Dendritic cell treated with granulocyte-macrophage colony-stimulating factor and Interleukin-4, amounts not matched to agents 40 ng/mL and 50 ng/mL, for 4 days (primary cell): ENCODE measurements at regions of chr9 and their contacts with region 1.

Region 1: DNA sequence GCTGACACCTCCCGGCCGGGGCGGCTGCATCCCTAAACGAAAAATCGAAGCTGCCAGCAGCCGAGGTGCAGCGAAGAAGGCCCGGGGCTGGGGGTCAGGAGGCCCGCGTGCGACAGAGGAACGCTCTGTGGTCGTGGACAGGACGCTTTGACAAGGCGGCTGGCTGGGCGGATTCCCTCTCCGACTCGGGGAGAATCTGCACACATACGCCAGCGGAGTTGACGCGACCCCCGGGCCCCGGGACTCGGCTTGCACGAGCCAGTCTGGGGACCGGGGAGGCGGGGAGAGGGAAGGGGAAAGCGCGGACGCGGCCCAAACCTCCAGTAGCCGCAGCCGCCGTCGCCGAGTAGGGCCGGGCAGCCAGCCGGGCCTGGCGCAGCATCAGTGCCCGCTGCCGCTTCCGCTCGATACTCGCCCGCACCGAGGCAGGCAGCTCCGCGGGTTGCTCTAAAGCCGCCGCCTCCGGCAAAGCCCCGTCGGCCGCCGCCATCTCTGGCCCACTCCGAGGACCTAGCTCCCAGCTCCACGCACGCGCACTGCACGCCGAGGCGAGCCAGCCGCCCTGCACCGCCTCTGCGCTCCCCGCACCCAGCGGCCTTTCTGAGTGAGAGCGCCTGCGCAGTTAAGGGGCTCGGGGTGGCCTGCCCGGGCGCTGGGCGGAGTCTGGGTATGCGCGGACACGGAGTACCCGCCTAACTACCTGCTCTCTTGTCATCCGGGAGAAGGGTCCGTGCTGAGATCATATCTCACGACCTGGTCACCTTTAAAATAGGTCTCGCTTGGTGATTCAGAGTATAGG is at the start of gene XPA:
- H3K4me3 Mint-ChIP-seq: peak within 1 kb of the TSS; percentile 91
- H3K27ac Mint-ChIP-seq: peak within 1 kb of the TSS; percentile 95
- H3K4me1 Mint-ChIP-seq: peaks cover 48% of the 10 kb centered on the region
- H3K27me3 Mint-ChIP-seq: peaks cover 23% of the 10 kb centered on the region

Region 2: GRCh38 chr9:97651646-97652045 is 45.4 kb before region 1 on chr9:
- intact Hi-C with region 1: loop called (anchors 5 kb)
- H3K4me3 Mint-ChIP-seq: no peak overlapping the region
- H3K27ac Mint-ChIP-seq: no peak overlapping the region
- H3K4me1 Mint-ChIP-seq: no peaks in the 10 kb centered on the region
- H3K27me3 Mint-ChIP-seq: no peaks in the 10 kb centered on the region

Region 3: GRCh38 chr9:97759581-97760288 is 62.7 kb after region 1 on chr9:
- intact Hi-C with region 1: no loop called
- H3K4me3 Mint-ChIP-seq: no peak overlapping the region
- H3K27ac Mint-ChIP-seq: no peak overlapping the region
- H3K4me1 Mint-ChIP-seq: no peaks in the 10 kb centered on the region
- H3K27me3 Mint-ChIP-seq: peaks cover 33% of the 10 kb centered on the region

Region 4: DNA sequence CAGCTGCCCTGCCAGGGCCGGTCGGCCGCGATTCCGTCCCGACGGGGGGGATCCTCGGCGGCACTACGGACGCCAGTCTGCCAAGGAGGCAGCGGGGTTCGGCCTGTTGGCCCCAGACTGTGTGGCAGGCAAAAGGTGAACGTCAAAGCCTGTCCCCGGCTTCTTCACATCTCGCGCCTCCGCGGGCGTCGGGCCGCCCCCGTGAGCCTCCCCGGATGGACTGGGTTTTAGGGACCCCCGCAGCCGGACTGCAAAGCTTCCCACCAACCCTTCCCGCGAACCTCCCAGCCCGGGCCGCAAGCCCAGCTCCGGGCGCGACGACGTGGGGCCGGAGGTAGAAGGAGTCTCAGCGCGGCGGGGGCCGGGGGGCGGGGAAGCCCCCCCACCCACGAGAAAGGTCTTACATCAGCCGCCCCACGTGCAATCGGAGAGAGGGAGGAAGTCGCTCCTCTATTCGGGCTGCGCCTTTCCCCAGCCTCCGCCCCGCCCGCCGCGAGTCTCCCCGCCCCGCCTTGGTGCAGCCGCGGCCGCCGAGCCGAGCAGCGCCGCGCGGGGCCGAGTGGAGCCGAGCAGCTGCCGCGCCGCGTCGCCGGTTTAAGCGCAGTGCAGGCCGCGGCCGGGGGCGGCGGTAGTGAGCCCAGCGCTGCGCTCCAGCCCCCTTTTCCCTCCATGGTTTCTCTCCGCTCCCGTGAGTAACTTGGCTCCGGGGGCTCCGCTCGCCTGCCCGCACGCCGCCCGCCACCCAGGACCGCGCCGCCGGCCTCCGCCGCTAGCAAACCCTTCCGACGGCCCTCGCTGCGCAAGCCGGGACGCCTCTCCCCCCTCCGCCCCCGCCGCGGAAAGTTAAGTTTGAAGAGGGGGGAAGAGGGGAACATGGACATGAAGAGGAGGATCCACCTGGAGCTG is 285.9 kb after region 1 on chr9 and contains the start of gene ANP32B:
- intact Hi-C with region 1: loop called (anchors 5 kb)
- H3K4me3 Mint-ChIP-seq: peak within 1 kb of the TSS; percentile 91
- H3K27ac Mint-ChIP-seq: peak within 1 kb of the TSS; percentile 96
- H3K4me1 Mint-ChIP-seq: peaks cover 29% of the 10 kb centered on the region
- H3K27me3 Mint-ChIP-seq: peaks cover 14% of the 10 kb centered on the region

Region 5: GRCh38 chr9:98045234-98046179 is 348.5 kb after region 1 on chr9:
- intact Hi-C with region 1: no loop called
- H3K4me3 Mint-ChIP-seq: peak overlapping the region; percentile 67
- H3K27ac Mint-ChIP-seq: peak overlapping the region; percentile 92
- H3K4me1 Mint-ChIP-seq: peaks cover 47% of the 10 kb centered on the region
- H3K27me3 Mint-ChIP-seq: no peaks in the 10 kb centered on the region

Region 6: DNA sequence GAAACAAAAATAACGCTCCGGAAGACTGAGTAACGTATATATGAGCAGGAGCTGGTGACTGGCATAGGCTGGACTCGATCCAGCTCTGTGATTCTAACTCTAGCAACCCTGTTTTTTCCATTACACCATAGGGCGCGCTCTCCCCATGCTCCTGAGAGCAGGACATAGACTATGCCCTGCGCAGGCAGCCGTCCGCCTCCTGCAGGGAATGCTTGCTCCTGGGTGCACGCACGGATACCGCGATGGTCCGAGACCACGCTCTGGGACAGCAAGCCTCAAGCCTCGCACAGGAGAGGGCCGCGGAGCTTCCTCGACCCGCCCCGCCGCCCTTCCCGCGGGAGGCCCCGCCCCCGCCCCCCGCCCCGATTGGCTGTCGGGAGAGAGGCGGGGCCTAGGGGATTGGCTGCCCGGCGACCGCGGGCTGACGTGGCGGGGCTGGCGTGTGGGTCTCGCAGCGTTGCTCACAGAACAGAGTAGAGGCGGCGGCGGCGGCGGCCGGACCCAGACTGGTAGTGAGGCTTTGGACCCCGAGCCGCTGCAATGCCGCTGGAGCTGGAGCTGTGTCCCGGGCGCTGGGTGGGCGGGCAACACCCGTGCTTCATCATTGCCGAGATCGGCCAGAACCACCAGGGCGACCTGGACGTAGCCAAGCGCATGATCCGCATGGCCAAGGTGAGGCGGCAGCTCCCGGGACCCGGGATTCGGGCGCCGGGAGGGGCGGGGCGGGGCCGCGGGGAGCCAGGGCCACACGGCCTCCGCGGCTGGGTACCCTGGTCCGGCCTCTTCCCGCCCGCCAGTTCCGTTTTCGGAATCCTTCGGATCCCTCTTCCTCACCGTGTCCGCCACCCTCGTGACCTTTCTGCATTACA is 359.5 kb after region 1 on chr9 and contains the start of gene NANS:
- intact Hi-C with region 1: loop called (anchors 5 kb)
- H3K4me3 Mint-ChIP-seq: peak within 1 kb of the TSS; percentile 93
- H3K27ac Mint-ChIP-seq: peak within 1 kb of the TSS; percentile 96
- H3K4me1 Mint-ChIP-seq: peaks cover 30% of the 10 kb centered on the region
- H3K27me3 Mint-ChIP-seq: no peaks in the 10 kb centered on the region